GM13977 (cell line): ENCODE measurements at regions of chr6 and their contacts with region 1.

Region 1: GRCh38 chr6:11575408-11576033 is 38.0 kb downstream of the TMEM170B start:
- DNase-seq: peak; percentile 53
- CTCF ChIP-seq: peak; percentile 91

Region 2: GRCh38 chr6:11144393-11144851 is 431.1 kb before region 1 on chr6:
- in situ Hi-C with region 1: loop called (anchors 10 kb)
- DNase-seq: peak; percentile 78
- CTCF ChIP-seq: peak; percentile 97

Region 3: DNA sequence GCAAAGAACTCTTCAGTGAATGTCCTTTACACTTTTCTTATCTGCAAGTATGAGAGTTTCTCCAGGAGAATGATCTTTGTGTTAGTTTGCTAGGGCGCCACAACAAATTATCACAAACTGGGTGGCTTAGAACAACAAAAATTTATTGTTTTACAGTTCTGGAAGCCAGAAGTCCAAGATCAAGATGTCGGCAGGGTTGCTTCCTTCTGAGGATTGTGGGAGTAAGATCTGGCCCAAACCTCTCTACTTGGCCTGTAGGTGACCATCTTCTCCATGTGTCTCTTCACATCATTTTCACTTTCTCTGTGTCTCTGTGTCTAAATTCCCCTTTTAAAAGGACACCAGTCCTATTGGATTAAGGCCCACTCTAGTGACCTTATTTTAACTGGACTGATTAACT is 100.1 kb after region 1 on chr6:
- in situ Hi-C with region 1: no loop called
- DNase-seq: no peak
- CTCF ChIP-seq: no peak

Region 4: GRCh38 chr6:12065321-12066140 is 490.0 kb after region 1 on chr6:
- in situ Hi-C with region 1: no loop called
- DNase-seq: peak; percentile 34
- CTCF ChIP-seq: no peak